Activated naive CD4-positive, alpha-beta T cell treated with anti-CD3 and anti-CD28 coated beads for 36 hours (primary cell): ENCODE measurements at regions of chr11 and their contacts with region 1.

Region 1: GRCh38 chr11:66119348-66120133 is 49.5 kb downstream of the PACS1 start:
- DNase-seq: no peak
- H3K4me3 Mint-ChIP-seq: no peak overlapping the region
- H3K27ac Mint-ChIP-seq: peak overlapping the region; percentile 1
- H3K4me1 Mint-ChIP-seq: peaks cover 83% of the 10 kb centered on the region
- H3K27me3 Mint-ChIP-seq: no peaks in the 10 kb centered on the region

Region 2: GRCh38 chr11:65988791-65989592 is 130.5 kb before region 1 on chr11:
- CTCF ChIA-PET with region 1: no interaction called
- intact Hi-C with region 1: no loop called
- DNase-seq: peak; percentile 98
- H3K4me3 Mint-ChIP-seq: no peak overlapping the region
- H3K27ac Mint-ChIP-seq: peak overlapping the region; percentile 70
- H3K4me1 Mint-ChIP-seq: peaks cover 4% of the 10 kb centered on the region
- H3K27me3 Mint-ChIP-seq: no peaks in the 10 kb centered on the region

Region 3: GRCh38 chr11:66136752-66137123 is 17.2 kb after region 1 on chr11:
- CTCF ChIA-PET with region 1: interaction called, 10 read pairs
- intact Hi-C with region 1: no loop called
- DNase-seq: peak; percentile 47
- H3K4me3 Mint-ChIP-seq: no peak overlapping the region
- H3K27ac Mint-ChIP-seq: peak overlapping the region; percentile 66
- H3K4me1 Mint-ChIP-seq: peaks cover 66% of the 10 kb centered on the region
- H3K27me3 Mint-ChIP-seq: no peaks in the 10 kb centered on the region

Region 4: DNA sequence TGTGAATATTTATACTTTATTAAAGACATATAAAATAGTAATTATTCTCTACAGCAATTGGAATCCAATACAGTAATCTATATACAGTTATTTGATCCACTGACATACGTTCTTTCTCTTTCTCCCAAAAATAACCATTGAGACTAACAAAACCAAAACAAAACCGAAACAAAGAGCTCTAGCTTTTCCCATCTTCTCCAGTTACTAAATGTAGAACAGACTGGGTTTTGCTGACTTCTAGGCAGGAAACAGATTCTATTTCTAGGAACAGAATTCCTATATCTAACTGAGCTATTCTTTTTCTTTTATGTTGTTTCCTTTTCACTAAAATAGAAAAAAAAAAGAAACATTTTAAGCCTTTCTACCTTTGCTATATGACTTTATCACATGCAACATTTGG is 30.6 kb after region 1 on chr11:
- CTCF ChIA-PET with region 1: no interaction called
- intact Hi-C with region 1: no loop called
- DNase-seq: no peak
- H3K4me3 Mint-ChIP-seq: no peak overlapping the region
- H3K27ac Mint-ChIP-seq: no peak overlapping the region
- H3K4me1 Mint-ChIP-seq: peaks cover 51% of the 10 kb centered on the region
- H3K27me3 Mint-ChIP-seq: no peaks in the 10 kb centered on the region